ENCODE measurements at regions of chr1 and their contacts with region 1.

Region 1: GRCh38 chr1:117447661-117448060 is 80.4 kb downstream of the MAN1A2 start:
- DNase-seq: no peak
- ATAC-seq: no peak
- H3K4me3 ChIP-seq: no peak overlapping the region
- H3K27ac ChIP-seq: no peak overlapping the region
- H3K4me1 ChIP-seq: no peaks in the 10 kb centered on the region
- H3K27me3 ChIP-seq: no peaks in the 10 kb centered on the region
- CTCF ChIP-seq: no peak
- POLR2A ChIP-seq: no peak
- RAD21 ChIP-seq: no peak

Region 2: GRCh38 chr1:117436513-117436912 is 11.1 kb before region 1 on chr1:
- CTCF ChIA-PET with region 1: no interaction called
- POLR2A ChIA-PET with region 1: no interaction called
- RAD21 ChIA-PET with region 1: no interaction called
- intact Hi-C with region 1: loop called (anchors 1 kb)
- DNase-seq: no peak
- ATAC-seq: no peak
- H3K4me3 ChIP-seq: no peak overlapping the region
- H3K27ac ChIP-seq: no peak overlapping the region
- H3K4me1 ChIP-seq: no peaks in the 10 kb centered on the region
- H3K27me3 ChIP-seq: no peaks in the 10 kb centered on the region
- CTCF ChIP-seq: no peak
- POLR2A ChIP-seq: no peak
- RAD21 ChIP-seq: no peak

Region 3: DNA sequence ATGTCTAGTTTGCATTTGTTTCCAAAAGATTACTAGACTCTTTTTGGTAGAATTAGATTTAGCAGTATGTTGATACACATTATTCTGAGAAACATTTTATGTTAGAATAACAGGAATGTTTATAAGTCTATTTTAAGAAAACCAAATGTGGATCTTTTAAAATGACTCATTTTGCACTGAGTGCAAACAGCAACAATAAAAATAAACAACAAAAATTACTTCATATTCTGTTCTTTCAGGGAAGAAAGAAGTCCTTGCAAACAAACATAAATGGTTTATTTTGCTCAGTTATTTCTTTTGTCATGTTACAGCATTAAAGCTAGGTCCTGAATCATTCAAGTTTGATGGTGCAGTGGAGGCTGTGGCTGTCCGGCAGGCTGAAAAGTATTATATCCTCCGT is 51.4 kb after region 1 on chr1:
- CTCF ChIA-PET with region 1: no interaction called
- POLR2A ChIA-PET with region 1: no interaction called
- RAD21 ChIA-PET with region 1: no interaction called
- intact Hi-C with region 1: loop called (anchors 5 kb)
- DNase-seq: no peak
- ATAC-seq: no peak
- H3K4me3 ChIP-seq: no peak overlapping the region
- H3K27ac ChIP-seq: no peak overlapping the region
- H3K4me1 ChIP-seq: no peaks in the 10 kb centered on the region
- H3K27me3 ChIP-seq: no peaks in the 10 kb centered on the region
- CTCF ChIP-seq: no peak
- POLR2A ChIP-seq: no peak
- RAD21 ChIP-seq: no peak

Region 4: DNA sequence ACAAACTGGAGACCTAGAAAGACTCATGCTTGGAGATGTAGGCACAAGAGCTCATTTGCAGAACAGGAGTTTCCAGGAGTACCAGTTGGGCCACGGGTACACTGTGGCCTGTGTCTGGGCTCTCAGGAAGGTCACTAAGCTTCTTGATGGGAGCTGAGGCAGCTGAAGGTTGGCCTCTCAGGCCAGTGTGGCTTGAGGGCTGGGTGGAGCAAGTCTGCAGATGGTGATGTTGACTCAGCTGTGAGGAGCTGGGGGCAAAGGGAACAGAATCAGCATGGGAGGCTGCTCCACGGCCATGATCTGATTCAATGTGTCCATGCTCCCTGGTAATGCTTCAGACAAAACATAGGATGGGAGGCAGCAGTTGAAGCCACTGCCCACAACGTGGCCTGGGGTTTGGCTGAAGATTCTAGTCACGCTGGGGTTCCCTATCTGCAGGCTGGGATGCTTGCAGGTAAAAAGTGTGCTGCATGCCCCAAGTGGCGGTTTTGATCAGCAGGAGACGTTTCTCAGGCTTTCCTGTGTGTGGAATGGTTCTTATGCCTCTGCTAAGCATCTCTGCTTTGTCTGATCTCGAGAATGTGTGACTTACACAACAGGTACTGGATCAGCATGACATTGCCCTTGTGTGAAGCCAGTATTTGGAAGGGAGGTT is 142.7 kb after region 1 on chr1:
- CTCF ChIA-PET with region 1: no interaction called
- POLR2A ChIA-PET with region 1: no interaction called
- RAD21 ChIA-PET with region 1: no interaction called
- intact Hi-C with region 1: no loop called
- DNase-seq: no peak
- ATAC-seq: 0 out of 2 replicates have a peak, but pooled peaks have one; percentile 38
- H3K4me3 ChIP-seq: no peak overlapping the region
- H3K27ac ChIP-seq: no peak overlapping the region
- H3K4me1 ChIP-seq: no peaks in the 10 kb centered on the region
- H3K27me3 ChIP-seq: no peaks in the 10 kb centered on the region
- CTCF ChIP-seq: no peak
- POLR2A ChIP-seq: no peak
- RAD21 ChIP-seq: no peak